B cell (primary cell): ENCODE measurements at regions of chr2 and their contacts with region 1.

Region 1: GRCh38 chr2:88669371-88670214 is 21.9 kb upstream of the RPIA start:
- DNase-seq: peak; percentile 72
- ATAC-seq: peak; percentile 78
- H3K4me3 ChIP-seq: no peak overlapping the region
- H3K4me3 Mint-ChIP-seq: no peak overlapping the region
- H3K27ac ChIP-seq: no peak overlapping the region
- H3K27ac Mint-ChIP-seq: no peak overlapping the region
- H3K4me1 ChIP-seq: peaks cover 0 to 3% of the 10 kb centered on the region in 2 donors
- H3K4me1 Mint-ChIP-seq: peaks cover 5% of the 10 kb centered on the region
- H3K27me3 ChIP-seq: no peaks in the 10 kb centered on the region
- H3K27me3 Mint-ChIP-seq: no peaks in the 10 kb centered on the region
- CTCF ChIP-seq: peak; percentile 81

Region 2: DNA sequence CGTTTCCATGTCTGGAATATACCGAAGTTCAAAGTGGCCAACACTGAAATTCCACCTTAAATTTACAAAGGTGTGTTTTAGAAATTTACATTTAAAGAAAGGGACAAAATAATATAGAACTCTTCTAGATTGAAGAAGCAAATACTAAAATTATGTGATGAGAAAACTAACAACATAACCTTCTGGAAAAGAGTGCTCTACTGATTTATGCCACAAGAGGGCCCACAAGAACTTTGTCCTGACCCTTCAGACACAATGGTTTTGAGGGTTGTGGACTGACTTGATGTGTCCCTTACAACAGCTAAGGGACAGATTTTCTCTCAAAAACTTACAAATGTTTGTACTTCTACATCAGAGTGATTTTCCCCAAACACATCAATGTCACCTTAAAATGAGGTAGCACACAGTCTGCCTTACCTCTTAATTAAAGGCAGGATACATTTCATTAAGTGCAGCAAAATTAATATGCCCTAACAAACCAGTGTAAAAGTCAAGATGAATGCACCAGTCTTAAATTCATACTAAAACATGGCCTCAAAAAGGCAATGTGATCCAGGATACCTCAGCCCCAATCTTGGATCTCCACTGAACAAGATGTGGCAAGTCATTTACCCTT is 78.5 kb before region 1 on chr2:
- CTCF ChIA-PET with region 1: interaction called, 540 read pairs
- POLR2A ChIA-PET with region 1: no interaction called
- intact Hi-C with region 1: loop called (anchors 1 kb)
- DNase-seq: peak; percentile 81
- ATAC-seq: peak; percentile 95
- H3K4me3 ChIP-seq: no peak overlapping the region
- H3K4me3 Mint-ChIP-seq: no peak overlapping the region
- H3K27ac ChIP-seq: peak overlapping the region in 1 of 2 donors; percentile 45
- H3K27ac Mint-ChIP-seq: peak overlapping the region; percentile 87
- H3K4me1 ChIP-seq: peaks cover 11 to 14% of the 10 kb centered on the region in 2 donors
- H3K4me1 Mint-ChIP-seq: peaks cover 25% of the 10 kb centered on the region
- H3K27me3 ChIP-seq: no peaks in the 10 kb centered on the region
- H3K27me3 Mint-ChIP-seq: no peaks in the 10 kb centered on the region
- CTCF ChIP-seq: peak; percentile 80

Region 3: DNA sequence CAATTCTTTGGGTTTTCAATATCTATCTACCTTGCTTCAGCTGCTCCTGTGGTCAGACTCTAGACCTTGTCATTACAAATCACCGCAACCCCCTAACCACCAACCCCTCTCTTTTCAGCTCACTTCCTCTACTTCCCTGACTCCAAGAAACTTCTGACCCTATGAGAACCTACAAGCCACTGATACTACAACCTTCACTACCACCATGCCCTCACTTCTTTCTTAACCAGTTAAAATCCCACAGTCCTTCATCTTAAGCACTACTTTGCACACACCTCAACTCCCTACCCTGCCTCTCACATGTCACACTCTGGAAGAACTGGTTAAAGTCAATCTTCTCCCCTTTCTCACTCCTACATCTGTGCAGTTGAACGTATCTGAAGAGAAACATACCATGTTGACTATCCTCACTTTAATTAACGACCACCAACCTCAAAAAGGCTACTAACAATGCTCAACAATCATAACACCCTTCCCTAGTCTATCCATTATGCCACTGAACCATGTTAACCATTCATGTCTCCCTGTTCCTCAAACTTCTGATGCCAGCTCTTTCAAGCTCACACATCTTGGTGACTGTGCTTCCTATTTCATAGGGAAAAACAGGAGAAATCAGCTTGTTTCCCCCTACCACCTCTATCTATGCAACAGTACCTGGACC is 55.0 kb before region 1 on chr2:
- CTCF ChIA-PET with region 1: interaction called, 13 read pairs
- POLR2A ChIA-PET with region 1: no interaction called
- intact Hi-C with region 1: no loop called
- DNase-seq: peak; percentile 41
- ATAC-seq: peak; percentile 31
- H3K4me3 ChIP-seq: peak overlapping the region in 1 of 5 experiments; percentile 29
- H3K4me3 Mint-ChIP-seq: no peak overlapping the region
- H3K27ac ChIP-seq: peak overlapping the region; percentile 61 to 84
- H3K27ac Mint-ChIP-seq: no peak overlapping the region
- H3K4me1 ChIP-seq: peaks cover 64 to 69% of the 10 kb centered on the region in 2 donors
- H3K4me1 Mint-ChIP-seq: peaks cover 51% of the 10 kb centered on the region
- H3K27me3 ChIP-seq: no peaks in the 10 kb centered on the region
- H3K27me3 Mint-ChIP-seq: no peaks in the 10 kb centered on the region
- CTCF ChIP-seq: no peak

Region 4: DNA sequence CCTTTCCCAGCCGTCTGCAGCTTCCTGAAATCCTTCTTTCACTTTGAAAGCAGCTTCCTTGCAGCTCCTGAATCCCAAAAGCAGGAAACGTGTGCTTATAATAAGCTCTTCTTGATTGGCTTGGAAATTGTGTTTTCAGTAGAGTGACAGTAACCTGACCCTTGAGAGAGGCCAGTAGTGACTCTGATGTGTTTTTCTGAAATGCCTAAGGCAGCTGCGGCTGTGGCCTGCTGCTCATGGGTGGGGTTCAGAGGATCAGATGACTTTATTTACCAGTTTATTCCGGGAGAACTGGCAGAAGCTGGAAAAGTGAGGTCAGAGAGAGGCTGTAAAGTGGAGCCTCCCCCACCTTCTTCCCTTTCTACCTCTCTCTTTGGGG is 10.1 kb before region 1 on chr2:
- CTCF ChIA-PET with region 1: interaction called, 54 read pairs
- POLR2A ChIA-PET with region 1: no interaction called
- intact Hi-C with region 1: no loop called
- DNase-seq: no peak
- ATAC-seq: no peak
- H3K4me3 ChIP-seq: no peak overlapping the region
- H3K4me3 Mint-ChIP-seq: no peak overlapping the region
- H3K27ac ChIP-seq: no peak overlapping the region
- H3K27ac Mint-ChIP-seq: no peak overlapping the region
- H3K4me1 ChIP-seq: no peaks in the 10 kb centered on the region
- H3K4me1 Mint-ChIP-seq: no peaks in the 10 kb centered on the region
- H3K27me3 ChIP-seq: no peaks in the 10 kb centered on the region
- H3K27me3 Mint-ChIP-seq: no peaks in the 10 kb centered on the region
- CTCF ChIP-seq: no peak

Region 5: DNA sequence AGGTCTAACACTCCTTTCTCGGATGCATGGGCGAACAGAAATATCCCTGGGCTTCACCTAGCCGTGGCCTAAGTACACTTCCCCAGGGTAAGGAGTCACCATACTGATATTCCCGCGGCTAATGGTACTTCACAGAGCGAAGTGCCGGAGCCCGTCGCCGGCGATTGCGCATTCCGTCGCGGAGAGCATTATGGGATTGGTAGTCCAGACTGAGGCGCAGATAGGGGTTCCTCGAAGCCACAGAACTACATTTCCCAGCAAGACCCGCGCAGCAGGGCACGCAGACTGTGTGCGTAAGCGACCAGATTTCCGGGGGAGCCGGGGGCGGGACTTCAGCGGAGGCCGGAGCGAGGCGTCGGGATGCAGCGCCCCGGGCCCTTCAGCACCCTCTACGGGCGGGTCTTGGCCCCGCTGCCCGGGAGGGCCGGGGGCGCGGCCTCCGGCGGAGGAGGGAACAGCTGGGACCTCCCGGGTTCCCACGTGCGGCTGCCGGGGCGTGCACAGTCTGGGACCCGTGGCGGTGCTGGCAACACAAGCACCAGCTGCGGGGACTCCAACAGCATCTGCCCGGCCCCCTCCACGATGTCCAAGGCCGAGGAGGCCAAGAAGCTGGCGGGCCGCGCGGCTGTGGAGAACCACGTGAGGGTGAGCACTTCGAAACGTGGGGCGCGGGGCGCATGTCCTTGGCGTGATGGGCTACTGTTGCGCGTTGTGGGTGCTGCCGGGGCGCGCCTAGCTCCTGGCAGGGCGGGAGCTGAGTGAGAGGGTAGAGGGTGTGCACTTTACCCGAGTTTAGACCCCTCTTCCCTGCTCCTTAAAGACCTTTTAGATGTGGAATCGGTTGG is 22.0 kb after region 1 on chr2 and contains the start of gene RPIA:
- CTCF ChIA-PET with region 1: interaction called, 25 read pairs
- POLR2A ChIA-PET with region 1: interaction called, 3 read pairs
- intact Hi-C with region 1: no loop called
- DNase-seq: peak; percentile 99
- ATAC-seq: peak; percentile 91
- H3K4me3 ChIP-seq: peak within 1 kb of the TSS; percentile 85 to 99 (median 95)
- H3K4me3 Mint-ChIP-seq: peak within 1 kb of the TSS; percentile 98
- H3K27ac ChIP-seq: peak within 1 kb of the TSS; percentile 68 to 69
- H3K27ac Mint-ChIP-seq: peak within 1 kb of the TSS; percentile 90
- H3K4me1 ChIP-seq: peaks cover 23 to 27% of the 10 kb centered on the region in 2 donors
- H3K4me1 Mint-ChIP-seq: peaks cover 52% of the 10 kb centered on the region
- H3K27me3 ChIP-seq: no peaks in the 10 kb centered on the region
- H3K27me3 Mint-ChIP-seq: no peaks in the 10 kb centered on the region
- CTCF ChIP-seq: peak; percentile 66
- total RNA-seq, gene RPIA: 19.7 and 22.8 TPM in 2 replicates

Region 6: GRCh38 chr2:88880441-88880953 is 210.9 kb after region 1 on chr2:
- CTCF ChIA-PET with region 1: no interaction called
- POLR2A ChIA-PET with region 1: no interaction called
- intact Hi-C with region 1: no loop called
- DNase-seq: peak; percentile 72
- ATAC-seq: peak; percentile 72
- H3K4me3 ChIP-seq: peak overlapping the region in 4 of 5 experiments; percentile 19 to 56 (median 42)
- H3K4me3 Mint-ChIP-seq: peak overlapping the region; percentile 78
- H3K27ac ChIP-seq: peak overlapping the region; percentile 73 to 83
- H3K27ac Mint-ChIP-seq: peak overlapping the region; percentile 87
- H3K4me1 ChIP-seq: peaks cover 29 to 56% of the 10 kb centered on the region in 2 donors
- H3K4me1 Mint-ChIP-seq: peaks cover 54% of the 10 kb centered on the region
- H3K27me3 ChIP-seq: no peaks in the 10 kb centered on the region
- H3K27me3 Mint-ChIP-seq: no peaks in the 10 kb centered on the region
- CTCF ChIP-seq: peak; percentile 62